Breast epithelium (tissue), 4 donors: ENCODE measurements at regions of chr17 and their contacts with region 1.

Region 1: DNA sequence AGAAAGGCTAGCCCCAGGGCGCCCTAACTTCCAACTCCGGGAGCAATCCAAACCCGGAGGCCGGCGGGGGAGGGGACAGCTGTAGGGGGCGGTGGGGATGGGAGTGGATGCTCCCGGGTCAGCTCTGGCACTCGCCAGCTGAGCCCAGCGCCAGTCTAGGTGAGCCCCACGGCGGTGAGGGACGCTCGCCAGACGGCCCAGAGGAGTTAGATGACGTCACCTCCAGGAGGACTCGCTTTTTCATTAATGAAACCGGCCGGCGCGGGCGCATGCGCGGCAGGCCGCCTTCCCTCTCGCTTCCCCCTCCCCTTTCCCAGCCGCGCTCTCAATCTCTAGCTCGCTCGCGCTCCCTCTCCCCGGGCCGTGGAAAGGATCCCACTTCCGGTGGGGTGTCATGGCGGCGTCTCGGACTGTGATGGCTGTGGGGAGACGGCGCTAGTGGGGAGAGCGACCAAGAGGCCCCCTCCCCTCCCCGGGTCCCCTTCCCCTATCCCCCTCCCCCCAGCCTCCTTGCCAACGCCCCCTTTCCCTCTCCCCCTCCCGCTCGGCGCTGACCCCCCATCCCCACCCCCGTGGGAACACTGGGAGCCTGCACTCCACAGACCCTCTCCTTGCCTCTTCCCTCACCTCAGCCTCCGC is at the start of gene NF1:
- DNase-seq: peak; percentile 94 to 95
- H3K4me3 ChIP-seq: peak within 1 kb of the TSS; percentile 87 to 97 (median 88)
- H3K27ac ChIP-seq: peak within 1 kb of the TSS; percentile 97 to 98
- H3K4me1 ChIP-seq: no peaks in the 10 kb centered on the region
- H3K27me3 ChIP-seq: no peaks in the 10 kb centered on the region
- CTCF ChIP-seq: no peak
- POLR2A ChIP-seq: peak; percentile 47
- total RNA-seq, gene NF1: 61.6 to 129 (median 97.7) TPM

Region 2: GRCh38 chr17:31248986-31249834 is 154.5 kb after region 1 on chr17:
- intact Hi-C with region 1: loop called (anchors 5 kb)
- DNase-seq: no peak
- H3K4me3 ChIP-seq: no peak overlapping the region
- H3K27ac ChIP-seq: no peak overlapping the region
- H3K4me1 ChIP-seq: no peaks in the 10 kb centered on the region
- H3K27me3 ChIP-seq: no peaks in the 10 kb centered on the region
- CTCF ChIP-seq: no peak
- POLR2A ChIP-seq: no peak